GM12878 (cell line): ENCODE measurements at regions of chr9 and their contacts with region 1.

Region 1: GRCh38 chr9:133992780-133993634 is 883 bp upstream of the VAV2 start:
- DNase-seq: no peak
- ATAC-seq: peak; percentile 73
- H3K4me3 ChIP-seq: peak overlapping the region; percentile 88
- H3K27ac ChIP-seq: peak overlapping the region; percentile 86
- H3K4me1 ChIP-seq: peaks cover 15% of the 10 kb centered on the region
- H3K27me3 ChIP-seq: no peaks in the 10 kb centered on the region
- CTCF ChIP-seq: peak; percentile 34 to 56 (median 47); a peak in 4 of 6 replicates
- EP300 ChIP-seq: no peak
- POLR2A ChIP-seq: peak; percentile 78
- RAD21 ChIP-seq: peak; percentile 22; the same call in 1 of the 2 replicates

Region 2: DNA sequence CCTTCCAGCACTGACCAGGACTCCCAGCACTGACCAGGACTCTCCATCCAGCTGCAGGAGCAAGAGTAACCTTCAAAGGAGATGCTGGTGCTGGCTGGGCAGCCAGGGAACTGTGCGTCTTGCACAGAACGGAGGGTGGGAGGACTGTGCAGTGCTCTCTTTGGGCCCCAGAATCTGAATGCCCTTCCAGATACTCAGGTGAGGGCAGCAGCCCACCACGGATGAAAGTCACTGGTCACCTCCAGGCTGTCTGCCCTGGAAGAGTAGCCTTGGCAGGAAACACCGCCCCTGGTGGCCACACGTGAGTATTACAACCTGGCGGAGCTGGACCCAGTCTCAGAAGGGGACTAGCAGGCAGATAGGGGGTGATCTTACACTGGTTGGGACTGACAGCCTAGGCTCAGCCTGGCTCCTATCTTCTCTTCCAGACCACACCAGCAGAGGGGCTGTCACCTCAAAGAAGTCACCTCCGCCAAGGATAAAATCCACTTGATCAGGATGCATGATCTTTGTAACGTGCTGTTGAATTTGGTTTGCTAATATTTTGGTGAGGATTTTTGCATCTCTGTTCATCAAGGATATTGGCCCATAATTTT is 250.1 kb before region 1 on chr9:
- CTCF ChIA-PET with region 1: interaction called, 24 read pairs
- POLR2A ChIA-PET with region 1: no interaction called
- RAD21 ChIA-PET with region 1: interaction called, 15 read pairs
- SMC1A ChIA-PET with region 1: interaction called, 12 read pairs
- in situ Hi-C with region 1: no loop called
- intact Hi-C with region 1: loop called (anchors 1 kb)
- DNase-seq: peak; percentile 23
- ATAC-seq: peak; percentile 92
- H3K4me3 ChIP-seq: no peak overlapping the region
- H3K27ac ChIP-seq: no peak overlapping the region
- H3K4me1 ChIP-seq: no peaks in the 10 kb centered on the region
- H3K27me3 ChIP-seq: peaks cover 0 to 2% of the 10 kb centered on the region in 2 experiments; a peak in 1 of 4 replicates
- CTCF ChIP-seq: peak; percentile 97 to 99 (median 99)
- EP300 ChIP-seq: no peak
- POLR2A ChIP-seq: no peak
- RAD21 ChIP-seq: peak; percentile 63

Region 3: DNA sequence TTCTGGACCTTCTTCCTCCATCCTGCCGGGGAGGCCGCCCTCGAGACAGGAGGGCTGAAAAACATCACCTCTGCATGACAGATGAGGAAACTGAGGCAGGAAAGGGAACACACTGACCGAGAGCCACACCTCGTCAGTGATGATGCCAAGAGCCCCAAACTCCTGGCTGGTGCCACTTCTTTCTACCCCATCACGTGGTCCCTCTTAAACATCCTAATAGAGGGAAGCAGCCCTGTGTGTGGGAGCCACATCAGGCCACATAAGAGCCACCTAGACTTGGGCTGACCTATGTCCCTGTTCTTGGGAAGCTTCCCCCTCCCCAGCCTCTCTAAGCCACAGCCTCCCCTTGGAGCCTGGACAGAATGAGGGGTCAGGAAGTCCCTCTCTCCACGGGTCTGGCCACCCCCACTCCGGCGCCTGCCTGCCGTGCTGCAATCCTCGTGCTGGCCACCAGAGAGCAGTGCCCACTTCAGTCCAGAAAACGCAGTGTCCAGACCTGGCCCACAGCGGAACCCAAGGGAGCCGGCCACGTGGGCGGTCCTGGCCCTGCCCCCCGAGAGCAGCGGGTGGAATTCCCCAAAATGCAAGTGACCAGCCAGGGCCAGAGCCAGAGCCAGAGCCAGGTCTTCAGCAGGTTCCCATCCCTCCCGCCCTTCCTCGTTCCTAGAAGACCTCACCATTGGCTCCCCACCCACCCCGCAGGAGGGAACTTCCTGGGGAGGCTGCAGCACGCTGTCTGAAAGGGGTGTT is 200.1 kb before region 1 on chr9:
- CTCF ChIA-PET with region 1: interaction called, 50 read pairs
- POLR2A ChIA-PET with region 1: interaction called, 4 read pairs
- RAD21 ChIA-PET with region 1: interaction called, 44 read pairs
- SMC1A ChIA-PET with region 1: interaction called, 18 read pairs
- in situ Hi-C with region 1: loop called (anchors 5 kb)
- intact Hi-C with region 1: loop called (anchors 1 kb)
- DNase-seq: no peak
- ATAC-seq: peak; percentile 94
- H3K4me3 ChIP-seq: no peak overlapping the region
- H3K27ac ChIP-seq: no peak overlapping the region; the same call in 1 of the 2 replicates
- H3K4me1 ChIP-seq: peaks cover 19% of the 10 kb centered on the region
- H3K27me3 ChIP-seq: no peaks in the 10 kb centered on the region
- CTCF ChIP-seq: peak; percentile 90 to 97 (median 96)
- EP300 ChIP-seq: no peak
- POLR2A ChIP-seq: no peak
- RAD21 ChIP-seq: peak; percentile 93

Region 4: GRCh38 chr9:133927041-133927440 is 66.0 kb before region 1 on chr9:
- CTCF ChIA-PET with region 1: no interaction called
- POLR2A ChIA-PET with region 1: no interaction called
- RAD21 ChIA-PET with region 1: interaction called, 4 read pairs
- SMC1A ChIA-PET with region 1: no interaction called
- in situ Hi-C with region 1: no loop called
- intact Hi-C with region 1: loop called (anchors 2 kb)
- DNase-seq: peak; percentile 49
- ATAC-seq: peak; percentile 95
- H3K4me3 ChIP-seq: no peak overlapping the region
- H3K27ac ChIP-seq: peak overlapping the region; percentile 29
- H3K4me1 ChIP-seq: peaks cover 11% of the 10 kb centered on the region
- H3K27me3 ChIP-seq: no peaks in the 10 kb centered on the region
- CTCF ChIP-seq: no peak
- EP300 ChIP-seq: no peak
- POLR2A ChIP-seq: no peak
- RAD21 ChIP-seq: no peak

Region 5: GRCh38 chr9:133979273-133979920 is 13.6 kb before region 1 on chr9:
- CTCF ChIA-PET with region 1: interaction called, 12 read pairs
- POLR2A ChIA-PET with region 1: interaction called, 4 read pairs
- RAD21 ChIA-PET with region 1: no interaction called
- SMC1A ChIA-PET with region 1: interaction called, 4 read pairs
- in situ Hi-C with region 1: no loop called
- intact Hi-C with region 1: no loop called
- DNase-seq: no peak
- ATAC-seq: peak; percentile 74
- H3K4me3 ChIP-seq: peak overlapping the region; percentile 20; the same call in 1 of the 2 replicates
- H3K27ac ChIP-seq: peak overlapping the region; percentile 48
- H3K4me1 ChIP-seq: peaks cover 18% of the 10 kb centered on the region
- H3K27me3 ChIP-seq: no peaks in the 10 kb centered on the region
- CTCF ChIP-seq: no peak
- EP300 ChIP-seq: no peak
- POLR2A ChIP-seq: no peak
- RAD21 ChIP-seq: no peak